Activated CD8-positive, alpha-beta T cell treated with anti-CD3 and anti-CD28 coated beads for 36 hours (primary cell): ENCODE measurements at regions of chr3 and their contacts with region 1.

Region 1: DNA sequence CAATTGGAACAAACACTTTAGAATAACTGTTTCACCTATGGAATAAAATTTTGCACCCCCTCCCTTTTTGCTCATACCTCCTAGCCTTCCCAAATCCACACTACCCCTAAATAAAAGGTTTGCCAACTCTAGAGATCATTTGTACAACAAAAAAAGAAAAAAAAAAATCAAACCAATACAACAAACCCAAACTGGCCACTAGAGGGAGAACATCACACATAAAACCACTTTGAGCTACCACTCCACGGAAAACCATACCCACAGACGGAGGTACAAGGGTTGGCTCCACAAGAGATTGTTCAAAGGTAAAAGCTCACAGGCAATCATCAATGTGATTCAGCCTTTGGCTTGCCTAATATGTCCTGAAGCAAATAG is 47.6 kb downstream of the SETMAR start:
- DNase-seq: peak; percentile 60
- ATAC-seq: peak; percentile 71
- H3K4me3 Mint-ChIP-seq: peak overlapping the region; percentile 67
- H3K27ac Mint-ChIP-seq: peak overlapping the region; percentile 40
- H3K4me1 Mint-ChIP-seq: peaks cover 19% of the 10 kb centered on the region
- H3K27me3 Mint-ChIP-seq: no peaks in the 10 kb centered on the region
- CTCF ChIP-seq: peak; percentile 93

Region 2: DNA sequence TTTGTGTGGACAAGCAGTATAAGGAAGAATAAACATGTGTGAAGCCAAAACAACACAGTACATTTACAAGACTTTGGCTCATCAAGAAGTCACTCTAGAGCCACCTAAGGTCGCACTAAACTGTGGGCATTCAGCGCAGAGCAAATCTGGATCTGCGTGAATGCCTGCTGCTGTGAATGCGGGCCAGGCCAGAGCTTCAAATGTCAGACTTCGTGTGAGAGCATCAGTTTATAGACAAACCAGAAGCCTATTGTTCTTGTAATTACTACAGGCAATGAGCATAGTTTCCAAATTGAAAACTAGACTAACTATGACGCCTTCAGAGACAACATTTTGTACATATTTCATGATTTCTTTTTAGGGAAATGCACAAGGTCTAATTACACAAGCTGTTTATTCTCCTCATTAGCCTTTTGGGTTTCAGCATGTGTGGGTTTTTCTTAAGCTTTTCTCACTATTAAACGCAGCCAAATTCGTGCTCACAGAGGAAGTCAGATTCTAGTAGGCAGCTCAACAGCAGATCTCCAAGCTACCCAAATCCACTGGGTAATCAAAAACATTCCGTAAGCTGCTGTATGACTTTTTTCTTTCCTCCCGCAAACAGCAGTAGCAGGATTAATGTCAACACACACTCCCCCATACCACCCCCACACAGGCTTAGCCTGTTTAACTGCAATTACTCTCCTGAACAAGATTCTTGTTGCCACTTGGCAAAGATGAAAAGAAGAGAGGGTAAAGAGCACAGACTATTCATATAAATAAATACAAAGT is 132.1 kb before region 1 on chr3:
- CTCF ChIA-PET with region 1: no interaction called
- POLR2A ChIA-PET with region 1: no interaction called
- intact Hi-C with region 1: no loop called
- DNase-seq: no peak
- ATAC-seq: no peak
- H3K4me3 Mint-ChIP-seq: no peak overlapping the region
- H3K27ac Mint-ChIP-seq: no peak overlapping the region
- H3K4me1 Mint-ChIP-seq: no peaks in the 10 kb centered on the region
- H3K27me3 Mint-ChIP-seq: no peaks in the 10 kb centered on the region
- CTCF ChIP-seq: no peak

Region 3: GRCh38 chr3:4340411-4341335 is 10.1 kb before region 1 on chr3:
- CTCF ChIA-PET with region 1: interaction called, 23 read pairs
- POLR2A ChIA-PET with region 1: no interaction called
- intact Hi-C with region 1: no loop called
- DNase-seq: no peak
- ATAC-seq: no peak
- H3K4me3 Mint-ChIP-seq: no peak overlapping the region
- H3K27ac Mint-ChIP-seq: no peak overlapping the region
- H3K4me1 Mint-ChIP-seq: no peaks in the 10 kb centered on the region
- H3K27me3 Mint-ChIP-seq: no peaks in the 10 kb centered on the region
- CTCF ChIP-seq: no peak

Region 4: GRCh38 chr3:4387210-4388204 is 36.7 kb after region 1 on chr3:
- CTCF ChIA-PET with region 1: interaction called, 13 read pairs
- POLR2A ChIA-PET with region 1: no interaction called
- intact Hi-C with region 1: loop called (anchors 1 kb)
- DNase-seq: no peak
- ATAC-seq: peak; percentile 87
- H3K4me3 Mint-ChIP-seq: no peak overlapping the region
- H3K27ac Mint-ChIP-seq: peak overlapping the region; percentile 66
- H3K4me1 Mint-ChIP-seq: peaks cover 35% of the 10 kb centered on the region
- H3K27me3 Mint-ChIP-seq: no peaks in the 10 kb centered on the region
- CTCF ChIP-seq: no peak

Region 5: GRCh38 chr3:4406746-4407568 is 56.2 kb after region 1 on chr3:
- CTCF ChIA-PET with region 1: interaction called, 6 read pairs
- POLR2A ChIA-PET with region 1: no interaction called
- intact Hi-C with region 1: loop called (anchors 5 kb)
- DNase-seq: no peak
- ATAC-seq: peak; percentile 38
- H3K4me3 Mint-ChIP-seq: no peak overlapping the region
- H3K27ac Mint-ChIP-seq: no peak overlapping the region
- H3K4me1 Mint-ChIP-seq: peaks cover 38% of the 10 kb centered on the region
- H3K27me3 Mint-ChIP-seq: no peaks in the 10 kb centered on the region
- CTCF ChIP-seq: no peak

Region 6: DNA sequence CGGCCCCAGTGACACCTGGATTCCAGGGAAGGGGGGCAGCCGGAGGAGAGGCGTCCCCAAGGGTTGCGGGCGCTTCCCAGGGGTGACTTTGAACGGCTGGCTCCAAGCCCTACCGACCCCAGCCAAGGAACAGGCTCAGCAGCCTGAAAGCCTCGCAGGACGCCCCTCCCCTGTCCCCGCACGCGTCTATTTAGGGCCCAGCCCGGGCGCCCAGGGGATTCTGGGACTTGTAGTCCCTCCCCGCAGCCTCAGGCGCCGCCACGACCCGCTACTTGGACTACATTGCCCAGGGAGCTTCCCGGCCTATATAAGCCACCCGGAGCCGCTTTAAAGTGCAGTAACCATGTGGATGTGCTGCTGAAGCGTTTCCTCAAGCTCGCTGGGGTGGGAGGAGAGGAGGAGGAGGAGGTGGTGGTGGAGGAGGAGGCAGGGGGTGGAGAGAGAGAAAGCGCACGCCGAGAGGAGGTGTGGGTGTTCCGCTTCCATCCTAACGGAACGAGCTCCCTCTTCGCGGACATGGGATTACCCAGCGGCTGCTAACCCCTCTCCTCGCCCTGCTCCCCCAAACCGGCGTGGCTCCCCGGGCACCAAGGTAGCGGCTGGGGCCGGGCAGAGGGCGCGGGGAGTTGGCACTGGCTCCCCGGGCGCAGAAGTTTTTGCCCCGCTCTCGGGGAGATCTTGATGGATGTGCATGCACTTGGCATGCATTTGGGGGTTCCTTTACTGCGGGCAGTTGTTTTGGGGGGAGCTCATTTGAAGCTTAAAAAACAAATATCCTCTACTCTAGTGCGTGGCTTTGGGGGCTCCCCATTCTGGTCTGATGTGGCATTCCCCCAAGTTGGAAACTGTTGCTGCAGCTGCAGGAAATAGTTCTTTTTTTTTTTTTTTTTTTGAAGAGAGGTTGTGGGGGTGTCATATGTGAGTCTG is 142.5 kb after region 1 on chr3 and contains the start of gene ITPR1:
- CTCF ChIA-PET with region 1: interaction called, 37 read pairs
- POLR2A ChIA-PET with region 1: interaction called, 9 read pairs
- intact Hi-C with region 1: loop called (anchors 5 kb)
- DNase-seq: peak; percentile 99
- ATAC-seq: peak; percentile 93
- H3K4me3 Mint-ChIP-seq: peak within 1 kb of the TSS; percentile 81
- H3K27ac Mint-ChIP-seq: peak within 1 kb of the TSS; percentile 88
- H3K4me1 Mint-ChIP-seq: peaks cover 37% of the 10 kb centered on the region
- H3K27me3 Mint-ChIP-seq: peaks cover 4% of the 10 kb centered on the region
- CTCF ChIP-seq: no peak
- total RNA-seq, gene ITPR1: 93.9 to 98.2 TPM